ENCODE measurements at regions of chr10 and their contacts with region 1.

Region 1: DNA sequence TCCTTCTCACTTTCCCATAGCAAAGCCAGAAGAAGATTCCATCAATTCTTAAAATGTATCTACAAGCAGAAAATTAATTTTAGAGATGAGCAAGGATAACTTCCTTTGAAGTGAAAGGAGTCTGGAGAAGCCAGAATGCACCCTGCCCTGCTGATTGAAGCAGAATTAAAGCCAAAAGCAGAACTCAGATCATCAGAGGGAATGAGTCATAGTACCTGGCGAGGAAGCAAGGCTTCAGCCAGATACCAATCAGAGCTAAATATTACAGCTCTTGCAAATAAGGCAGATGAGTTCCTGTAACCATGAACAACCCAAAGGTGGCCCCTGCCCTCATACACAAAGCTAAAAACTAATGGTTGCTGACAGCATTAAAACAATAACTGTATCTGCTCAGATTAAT is 10.4 kb downstream of the HTR7 start:
- DNase-seq: peak; percentile 82
- H3K27ac ChIP-seq: no peak overlapping the region
- CTCF ChIP-seq: no peak

Region 2: DNA sequence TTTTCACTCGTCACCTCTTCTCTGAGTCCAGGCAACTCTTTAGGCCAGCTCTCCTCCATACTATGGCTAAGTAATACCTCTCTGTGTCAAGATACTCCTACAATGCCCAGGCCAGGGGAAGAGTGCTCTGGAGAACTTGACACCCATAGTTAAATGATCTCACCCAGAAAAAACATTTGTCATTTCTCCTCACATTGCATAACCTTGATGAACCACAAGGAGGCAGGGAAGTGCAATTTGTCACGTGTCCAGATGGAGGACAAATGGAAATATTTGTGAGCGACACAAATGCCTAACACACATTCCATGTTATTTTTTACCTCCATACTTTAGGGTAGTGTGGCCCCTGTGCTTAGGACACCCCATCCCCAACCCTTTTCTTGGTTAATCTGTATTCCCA is 67.9 kb before region 1 on chr10:
- CTCF ChIA-PET with region 1: no interaction called
- POLR2A ChIA-PET with region 1: no interaction called
- DNase-seq: peak; percentile 20
- H3K27ac ChIP-seq: no peak overlapping the region
- CTCF ChIP-seq: no peak

Region 3: GRCh38 chr10:90857635-90858460 is 10.4 kb after region 1 on chr10 and contains the start of gene HTR7:
- CTCF ChIA-PET with region 1: interaction called, 10 read pairs
- POLR2A ChIA-PET with region 1: no interaction called
- DNase-seq: peak; percentile 59
- H3K27ac ChIP-seq: peak within 1 kb of the TSS; percentile 87
- CTCF ChIP-seq: peak; percentile 84

Region 4: DNA sequence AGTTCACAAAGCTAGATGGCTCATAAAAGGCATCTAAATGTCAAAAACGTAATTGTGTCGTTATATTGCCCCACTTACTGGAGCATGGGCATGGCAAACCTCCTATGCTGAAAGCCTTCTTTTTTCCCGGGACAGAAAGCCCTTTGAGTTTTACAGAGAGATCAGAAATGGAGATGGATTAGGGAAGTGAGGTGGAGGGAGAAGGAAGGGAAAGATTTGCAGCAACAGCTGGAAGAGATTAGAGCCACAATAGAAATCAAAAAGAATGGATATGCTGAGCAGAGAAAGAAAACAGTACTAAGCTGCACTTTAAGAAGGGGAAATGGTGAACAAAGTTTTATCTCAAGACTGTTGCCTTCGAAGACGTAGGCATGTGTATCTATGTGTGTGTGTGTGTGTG is 275.8 kb after region 1 on chr10:
- CTCF ChIA-PET with region 1: no interaction called
- POLR2A ChIA-PET with region 1: no interaction called
- DNase-seq: no peak
- H3K27ac ChIP-seq: no peak overlapping the region
- CTCF ChIP-seq: no peak